CD4-positive, alpha-beta T cell (primary cell): ENCODE measurements at regions of chr10 and their contacts with region 1.

Region 1: GRCh38 chr10:87861953-87862678 is 1.2 kb downstream of the KLLN start:
- DNase-seq: peak; percentile 89 to 98 (median 92)
- ATAC-seq: peak; percentile 72
- H3K4me3 ChIP-seq: peak overlapping the region; percentile 94
- H3K4me3 Mint-ChIP-seq: peak overlapping the region; percentile 96
- H3K27ac ChIP-seq: peak overlapping the region; percentile 81 to 84
- H3K27ac Mint-ChIP-seq: peak overlapping the region; percentile 92
- H3K4me1 ChIP-seq: peaks cover 22% of the 10 kb centered on the region
- H3K4me1 Mint-ChIP-seq: peaks cover 43% of the 10 kb centered on the region
- H3K27me3 ChIP-seq: no peaks in the 10 kb centered on the region
- H3K27me3 Mint-ChIP-seq: no peaks in the 10 kb centered on the region
- CTCF ChIP-seq: no peak

Region 2: GRCh38 chr10:87850742-87851205 is 11.3 kb before region 1 on chr10:
- CTCF ChIA-PET with region 1: interaction called, 4 read pairs
- POLR2A ChIA-PET with region 1: interaction called, 19 read pairs
- intact Hi-C with region 1: no loop called
- DNase-seq: peak; percentile 18 to 81 (median 39)
- ATAC-seq: peak; percentile 95
- H3K4me3 ChIP-seq: no peak overlapping the region
- H3K4me3 Mint-ChIP-seq: no peak overlapping the region
- H3K27ac ChIP-seq: no peak overlapping the region
- H3K27ac Mint-ChIP-seq: no peak overlapping the region
- H3K4me1 ChIP-seq: peaks cover 3% of the 10 kb centered on the region
- H3K4me1 Mint-ChIP-seq: peaks cover 17% of the 10 kb centered on the region
- H3K27me3 ChIP-seq: no peaks in the 10 kb centered on the region
- H3K27me3 Mint-ChIP-seq: no peaks in the 10 kb centered on the region
- CTCF ChIP-seq: peak; percentile 71

Region 3: DNA sequence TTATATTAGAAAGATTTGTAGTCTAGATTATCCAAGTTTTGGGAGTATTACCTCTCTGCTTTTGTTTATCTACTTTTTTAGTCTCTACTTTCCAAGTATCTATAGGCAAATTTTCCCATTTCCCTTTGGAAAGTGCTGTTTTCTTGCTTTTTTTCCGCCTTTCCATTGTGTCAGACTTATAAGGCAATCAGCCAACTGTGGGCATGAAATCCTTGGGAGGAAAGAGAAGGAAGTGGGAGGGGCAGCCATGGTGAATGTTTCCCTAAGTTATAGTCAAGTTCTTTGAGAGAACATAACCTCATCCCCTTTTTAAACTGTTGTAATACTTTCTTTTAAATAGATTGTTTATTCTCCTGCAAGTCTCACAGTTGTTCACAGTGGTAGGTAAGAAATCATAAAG is 53.9 kb after region 1 on chr10:
- CTCF ChIA-PET with region 1: no interaction called
- POLR2A ChIA-PET with region 1: interaction called, 16 read pairs
- intact Hi-C with region 1: loop called in 1 of 2 experiments (anchors 5 kb)
- DNase-seq: no peak
- ATAC-seq: no peak
- H3K4me3 ChIP-seq: no peak overlapping the region
- H3K4me3 Mint-ChIP-seq: peak overlapping the region; percentile 32
- H3K27ac ChIP-seq: no peak overlapping the region
- H3K27ac Mint-ChIP-seq: peak overlapping the region; percentile 25
- H3K4me1 ChIP-seq: peaks cover 15% of the 10 kb centered on the region
- H3K4me1 Mint-ChIP-seq: peaks cover 73% of the 10 kb centered on the region
- H3K27me3 ChIP-seq: no peaks in the 10 kb centered on the region
- H3K27me3 Mint-ChIP-seq: no peaks in the 10 kb centered on the region
- CTCF ChIP-seq: no peak

Region 4: GRCh38 chr10:88064608-88065382 is 202.7 kb after region 1 on chr10:
- CTCF ChIA-PET with region 1: no interaction called
- POLR2A ChIA-PET with region 1: interaction called, 56 read pairs
- intact Hi-C with region 1: loop called in 1 of 2 experiments (anchors 2 kb)
- DNase-seq: peak in 9 of 14 experiments; percentile 7 to 80 (median 32)
- ATAC-seq: peak; percentile 91
- H3K4me3 ChIP-seq: no peak overlapping the region
- H3K4me3 Mint-ChIP-seq: peak overlapping the region; percentile 28
- H3K27ac ChIP-seq: peak overlapping the region in 1 of 2 donors; percentile 38
- H3K27ac Mint-ChIP-seq: peak overlapping the region; percentile 89
- H3K4me1 ChIP-seq: peaks cover 55% of the 10 kb centered on the region
- H3K4me1 Mint-ChIP-seq: peaks cover 80% of the 10 kb centered on the region
- H3K27me3 ChIP-seq: no peaks in the 10 kb centered on the region
- H3K27me3 Mint-ChIP-seq: no peaks in the 10 kb centered on the region
- CTCF ChIP-seq: no peak

Region 5: GRCh38 chr10:88194041-88194887 is 332.1 kb after region 1 on chr10:
- CTCF ChIA-PET with region 1: no interaction called
- POLR2A ChIA-PET with region 1: interaction called, 8 read pairs
- intact Hi-C with region 1: loop called in 1 of 2 experiments (anchors 10 kb)
- DNase-seq: peak; percentile 16 to 89 (median 40)
- ATAC-seq: peak; percentile 97
- H3K4me3 ChIP-seq: peak overlapping the region; percentile 19
- H3K4me3 Mint-ChIP-seq: peak overlapping the region; percentile 47
- H3K27ac ChIP-seq: peak overlapping the region; percentile 9 to 57
- H3K27ac Mint-ChIP-seq: peak overlapping the region; percentile 77
- H3K4me1 ChIP-seq: peaks cover 27% of the 10 kb centered on the region
- H3K4me1 Mint-ChIP-seq: peaks cover 61% of the 10 kb centered on the region
- H3K27me3 ChIP-seq: no peaks in the 10 kb centered on the region
- H3K27me3 Mint-ChIP-seq: no peaks in the 10 kb centered on the region
- CTCF ChIP-seq: no peak

Region 6: GRCh38 chr10:88392222-88392621 is 530.1 kb after region 1 on chr10:
- CTCF ChIA-PET with region 1: interaction called, 4 read pairs
- POLR2A ChIA-PET with region 1: interaction called, 168 read pairs
- intact Hi-C with region 1: loop called (anchors 1 kb)
- DNase-seq: peak in 4 of 14 experiments; percentile 29 to 47 (median 46)
- ATAC-seq: peak; percentile 84
- H3K4me3 ChIP-seq: peak overlapping the region; percentile 4
- H3K4me3 Mint-ChIP-seq: peak overlapping the region; percentile 59
- H3K27ac ChIP-seq: peak overlapping the region in 1 of 2 donors; percentile 12
- H3K27ac Mint-ChIP-seq: peak overlapping the region; percentile 72
- H3K4me1 ChIP-seq: peaks cover 24% of the 10 kb centered on the region
- H3K4me1 Mint-ChIP-seq: peaks cover 14% of the 10 kb centered on the region
- H3K27me3 ChIP-seq: no peaks in the 10 kb centered on the region
- H3K27me3 Mint-ChIP-seq: no peaks in the 10 kb centered on the region
- CTCF ChIP-seq: no peak

Region 7: GRCh38 chr10:88515235-88515634 is 653.1 kb after region 1 on chr10:
- CTCF ChIA-PET with region 1: no interaction called
- POLR2A ChIA-PET with region 1: no interaction called
- intact Hi-C with region 1: no loop called
- DNase-seq: no peak
- ATAC-seq: no peak
- H3K4me3 ChIP-seq: no peak overlapping the region
- H3K4me3 Mint-ChIP-seq: no peak overlapping the region
- H3K27ac ChIP-seq: no peak overlapping the region
- H3K27ac Mint-ChIP-seq: no peak overlapping the region
- H3K4me1 ChIP-seq: no peaks in the 10 kb centered on the region
- H3K4me1 Mint-ChIP-seq: no peaks in the 10 kb centered on the region
- H3K27me3 ChIP-seq: no peaks in the 10 kb centered on the region
- H3K27me3 Mint-ChIP-seq: no peaks in the 10 kb centered on the region
- CTCF ChIP-seq: no peak

Region 8: DNA sequence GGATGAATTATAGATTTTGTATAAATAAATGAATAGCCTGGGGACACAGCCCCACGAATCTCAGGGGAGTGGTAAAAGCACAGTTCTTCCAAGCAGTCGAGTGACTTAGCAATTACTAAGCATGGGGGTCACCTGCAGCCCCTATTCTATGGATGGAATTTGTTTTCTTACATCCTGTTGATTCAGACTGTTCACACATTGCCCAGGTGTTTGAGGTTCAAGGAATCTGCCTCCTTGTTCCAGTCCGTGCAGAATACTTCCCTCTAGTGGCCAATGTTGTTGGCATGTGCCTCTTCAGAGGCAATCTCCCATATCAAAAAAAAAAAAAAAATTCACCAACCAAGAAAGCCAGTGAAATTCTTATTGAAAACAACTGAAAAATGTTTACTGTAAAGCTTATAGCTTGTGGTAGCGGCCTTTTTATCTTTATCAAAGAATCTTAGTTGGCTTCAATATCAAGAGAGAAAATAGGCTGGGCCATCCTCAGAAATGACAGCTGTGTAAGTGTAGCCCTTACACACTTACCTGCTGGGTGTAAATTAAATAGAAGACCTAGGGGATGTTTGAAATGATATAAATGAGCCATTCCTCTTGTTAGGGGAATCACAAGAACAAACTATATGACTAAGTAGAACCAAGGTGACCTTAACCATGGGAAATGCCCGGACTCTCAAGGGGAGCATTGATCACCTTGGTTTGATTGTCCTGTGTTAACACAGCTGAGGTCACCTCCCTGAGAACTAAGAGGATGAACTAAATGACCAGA is 948.3 kb after region 1 on chr10:
- CTCF ChIA-PET with region 1: no interaction called
- POLR2A ChIA-PET with region 1: no interaction called
- intact Hi-C with region 1: loop called (anchors 10 kb)
- DNase-seq: peak in 9 of 14 experiments; percentile 9 to 76 (median 21)
- ATAC-seq: peak; percentile 82
- H3K4me3 ChIP-seq: no peak overlapping the region
- H3K4me3 Mint-ChIP-seq: no peak overlapping the region
- H3K27ac ChIP-seq: no peak overlapping the region
- H3K27ac Mint-ChIP-seq: no peak overlapping the region
- H3K4me1 ChIP-seq: peaks cover 3% of the 10 kb centered on the region
- H3K4me1 Mint-ChIP-seq: peaks cover 15% of the 10 kb centered on the region
- H3K27me3 ChIP-seq: no peaks in the 10 kb centered on the region
- H3K27me3 Mint-ChIP-seq: no peaks in the 10 kb centered on the region
- CTCF ChIP-seq: peak; percentile 86